OCI-LY7 (cell line): ENCODE measurements at regions of chr12 and their contacts with region 1.

Region 1: GRCh38 chr12:76031537-76032073 is at the start of gene PHLDA1:
- DNase-seq: peak; percentile 91
- H3K4me3 ChIP-seq: peak within 1 kb of the TSS; percentile 71
- H3K27ac ChIP-seq: no peak within 1 kb of the TSS
- H3K4me1 ChIP-seq: peaks cover 28% of the 10 kb centered on the region
- CTCF ChIP-seq: peak; percentile 73
- total RNA-seq, gene PHLDA1: 0.44 and 0.54 TPM in 2 replicates

Region 2: DNA sequence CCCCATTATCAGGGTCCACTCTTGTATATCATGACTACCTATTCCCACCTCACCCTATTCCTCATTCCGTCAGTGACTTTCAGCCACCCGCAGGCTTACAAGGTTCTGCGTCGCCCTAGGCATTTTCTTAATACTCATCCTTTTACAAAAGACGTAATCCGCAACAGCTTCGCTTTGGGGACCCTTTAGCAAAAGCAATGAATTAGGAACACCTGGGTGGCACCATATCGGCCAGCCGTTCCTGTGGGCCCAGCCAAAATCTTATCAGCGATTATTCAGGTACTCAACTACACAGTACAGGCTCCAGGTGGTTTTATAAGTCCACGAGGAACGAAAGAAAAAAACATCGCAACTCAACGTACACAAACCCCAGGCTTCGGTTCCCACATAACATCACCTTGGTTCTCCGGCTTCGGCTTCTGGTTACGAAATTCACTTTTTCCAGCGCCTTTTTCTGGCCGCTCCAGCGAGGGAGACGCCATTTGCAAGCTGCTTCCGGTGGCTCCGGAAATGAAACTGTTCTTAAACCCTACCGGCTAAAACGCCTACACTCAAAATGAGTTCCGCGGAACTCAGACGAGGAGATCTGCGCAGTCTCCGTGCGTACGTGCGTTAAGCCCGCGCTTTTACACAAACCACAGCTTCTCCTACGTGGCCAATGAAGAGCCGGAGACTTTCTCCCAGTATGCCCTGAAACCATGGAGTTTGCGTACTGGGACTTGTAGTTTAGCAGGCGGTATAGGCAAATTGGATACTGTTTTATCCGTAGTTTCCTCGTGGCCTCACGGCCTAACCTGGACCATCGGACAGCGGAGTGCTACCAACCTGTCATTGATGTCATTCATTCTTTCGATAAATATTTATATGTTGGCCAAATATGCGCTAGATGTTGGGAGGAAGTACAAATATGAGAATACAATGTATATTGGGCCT is 520.2 kb before region 1 on chr12 and contains the start of gene KRR1:
- CTCF ChIA-PET with region 1: no interaction called
- POLR2A ChIA-PET with region 1: no interaction called
- intact Hi-C with region 1: loop called (anchors 5 kb)
- DNase-seq: peak; percentile 96
- H3K4me3 ChIP-seq: peak within 1 kb of the TSS; percentile 97
- H3K27ac ChIP-seq: peak within 1 kb of the TSS; percentile 62
- H3K4me1 ChIP-seq: peaks cover 22% of the 10 kb centered on the region
- CTCF ChIP-seq: no peak
- total RNA-seq, gene KRR1: 27.6 and 44.0 TPM in 2 replicates

Region 3: DNA sequence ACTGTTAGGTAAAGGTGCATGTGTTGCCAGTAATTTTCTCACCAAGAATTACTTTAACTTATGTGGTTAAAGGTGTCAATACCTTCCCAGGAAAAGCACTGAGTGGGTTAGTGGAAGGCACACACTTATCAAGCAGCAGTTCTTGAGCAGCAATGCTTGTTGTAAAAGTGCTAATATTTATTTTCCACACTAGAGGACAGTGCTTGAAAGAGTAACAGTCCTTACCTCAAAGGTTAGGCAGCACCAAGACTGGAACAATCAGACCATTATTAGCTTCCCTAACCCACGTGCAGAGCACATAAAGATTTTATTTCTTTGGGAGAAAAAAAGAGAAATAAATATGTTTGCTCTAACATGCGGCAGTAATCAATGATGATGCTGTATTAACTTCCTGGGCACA is 471.4 kb before region 1 on chr12:
- CTCF ChIA-PET with region 1: no interaction called
- POLR2A ChIA-PET with region 1: interaction called, 3 read pairs
- intact Hi-C with region 1: loop called (anchors 1 kb)
- DNase-seq: peak; percentile 31
- H3K4me3 ChIP-seq: no peak overlapping the region
- H3K27ac ChIP-seq: no peak overlapping the region
- H3K4me1 ChIP-seq: no peaks in the 10 kb centered on the region
- CTCF ChIP-seq: peak; percentile 58

Region 4: DNA sequence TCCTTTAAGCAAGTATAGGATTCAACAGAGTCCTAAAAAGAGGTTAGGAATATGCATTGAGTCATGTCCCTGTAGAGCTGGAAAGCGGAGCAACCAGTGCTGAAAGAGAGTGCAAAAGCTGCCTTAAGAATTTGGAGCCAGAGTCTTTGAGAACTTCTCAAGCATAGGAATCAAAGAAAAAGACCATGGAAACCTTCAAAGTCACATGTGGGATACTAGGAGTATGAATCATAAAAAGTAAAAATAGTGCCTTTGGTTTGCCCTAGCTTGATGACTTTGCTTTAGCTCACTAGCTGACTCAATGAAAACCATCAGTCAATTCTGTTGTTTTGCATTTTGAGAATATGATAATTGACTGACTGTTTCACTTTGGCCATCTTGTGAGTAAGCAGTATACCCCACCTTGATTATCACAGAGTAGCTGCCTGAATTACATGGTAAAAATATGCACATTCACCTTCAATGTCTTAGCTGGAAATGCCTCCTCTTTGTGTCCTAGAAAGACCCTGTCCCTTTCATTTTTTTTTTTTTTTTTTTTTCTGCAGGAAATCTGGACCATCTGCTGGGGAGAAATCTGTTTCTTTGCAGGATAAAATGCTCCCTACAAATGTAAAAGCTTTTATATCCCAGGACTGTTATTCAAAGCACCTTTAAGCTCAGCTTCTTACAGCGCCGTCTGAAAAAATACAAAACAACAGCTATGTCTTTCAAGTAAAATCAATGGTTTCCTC is 271.6 kb before region 1 on chr12:
- CTCF ChIA-PET with region 1: interaction called, 5 read pairs
- POLR2A ChIA-PET with region 1: no interaction called
- intact Hi-C with region 1: loop called (anchors 1 kb)
- DNase-seq: no peak
- H3K4me3 ChIP-seq: peak overlapping the region; percentile 50
- H3K27ac ChIP-seq: peak overlapping the region; percentile 91
- H3K4me1 ChIP-seq: peaks cover 62% of the 10 kb centered on the region
- CTCF ChIP-seq: no peak

Region 5: GRCh38 chr12:75917083-75917482 is 114.5 kb before region 1 on chr12:
- CTCF ChIA-PET with region 1: no interaction called
- POLR2A ChIA-PET with region 1: no interaction called
- intact Hi-C with region 1: loop called (anchors 2 kb)
- DNase-seq: peak; percentile 76
- H3K4me3 ChIP-seq: peak overlapping the region; percentile 36
- H3K27ac ChIP-seq: peak overlapping the region; percentile 60
- H3K4me1 ChIP-seq: peaks cover 28% of the 10 kb centered on the region
- CTCF ChIP-seq: no peak

Region 6: GRCh38 chr12:76266797-76267196 is 235.2 kb after region 1 on chr12:
- CTCF ChIA-PET with region 1: no interaction called
- POLR2A ChIA-PET with region 1: no interaction called
- intact Hi-C with region 1: no loop called
- DNase-seq: no peak
- H3K4me3 ChIP-seq: no peak overlapping the region
- H3K27ac ChIP-seq: no peak overlapping the region
- H3K4me1 ChIP-seq: no peaks in the 10 kb centered on the region
- CTCF ChIP-seq: no peak